ENCODE measurements at regions of chr17 and their contacts with region 1.

Region 1: DNA sequence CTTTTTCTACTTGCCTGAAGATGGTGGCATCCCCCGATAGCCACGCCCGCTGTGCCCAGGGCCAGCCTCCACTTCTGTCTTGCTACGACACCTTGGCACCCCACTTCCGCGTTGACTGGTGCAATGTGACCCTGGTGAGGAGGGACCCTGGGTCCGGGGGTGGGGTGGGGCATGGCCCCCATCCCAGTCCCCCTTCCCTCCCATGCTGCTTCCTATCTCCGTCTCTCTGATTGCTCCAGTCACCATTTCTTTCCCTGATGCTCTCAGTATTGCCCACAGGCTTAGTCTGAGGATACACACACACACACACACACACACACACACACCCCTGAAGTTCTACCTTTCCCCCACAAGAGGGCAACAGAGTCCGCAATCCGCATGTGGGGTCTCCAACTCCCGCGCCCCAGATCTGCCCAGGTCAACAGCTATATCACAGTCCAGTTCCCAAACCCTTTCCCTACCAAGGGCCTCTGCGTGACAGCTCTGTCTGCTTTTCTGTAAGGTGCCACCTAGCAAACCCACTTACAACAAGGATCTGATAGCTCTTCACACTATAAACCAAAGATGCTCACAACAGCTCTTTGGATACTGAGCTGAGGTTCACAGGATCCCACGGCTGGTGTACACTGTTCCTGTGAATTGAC is 3.4 kb downstream of the SGCA start:
- DNase-seq: peak in 1 of 2 experiments; percentile 73
- H3K4me3 ChIP-seq: no peak overlapping the region
- H3K27ac ChIP-seq: no peak overlapping the region
- H3K4me1 ChIP-seq: peaks cover 0 to 14% (median 8%) of the 10 kb centered on the region in 4 experiments; a peak in 5 of 7 replicates
- H3K27me3 ChIP-seq: no peaks in the 10 kb centered on the region
- CTCF ChIP-seq: peak; percentile 80 to 98 (median 96)
- EP300 ChIP-seq: no peak
- POLR2A ChIP-seq: no peak
- RAD21 ChIP-seq: peak; percentile 96 to 97

Region 2: DNA sequence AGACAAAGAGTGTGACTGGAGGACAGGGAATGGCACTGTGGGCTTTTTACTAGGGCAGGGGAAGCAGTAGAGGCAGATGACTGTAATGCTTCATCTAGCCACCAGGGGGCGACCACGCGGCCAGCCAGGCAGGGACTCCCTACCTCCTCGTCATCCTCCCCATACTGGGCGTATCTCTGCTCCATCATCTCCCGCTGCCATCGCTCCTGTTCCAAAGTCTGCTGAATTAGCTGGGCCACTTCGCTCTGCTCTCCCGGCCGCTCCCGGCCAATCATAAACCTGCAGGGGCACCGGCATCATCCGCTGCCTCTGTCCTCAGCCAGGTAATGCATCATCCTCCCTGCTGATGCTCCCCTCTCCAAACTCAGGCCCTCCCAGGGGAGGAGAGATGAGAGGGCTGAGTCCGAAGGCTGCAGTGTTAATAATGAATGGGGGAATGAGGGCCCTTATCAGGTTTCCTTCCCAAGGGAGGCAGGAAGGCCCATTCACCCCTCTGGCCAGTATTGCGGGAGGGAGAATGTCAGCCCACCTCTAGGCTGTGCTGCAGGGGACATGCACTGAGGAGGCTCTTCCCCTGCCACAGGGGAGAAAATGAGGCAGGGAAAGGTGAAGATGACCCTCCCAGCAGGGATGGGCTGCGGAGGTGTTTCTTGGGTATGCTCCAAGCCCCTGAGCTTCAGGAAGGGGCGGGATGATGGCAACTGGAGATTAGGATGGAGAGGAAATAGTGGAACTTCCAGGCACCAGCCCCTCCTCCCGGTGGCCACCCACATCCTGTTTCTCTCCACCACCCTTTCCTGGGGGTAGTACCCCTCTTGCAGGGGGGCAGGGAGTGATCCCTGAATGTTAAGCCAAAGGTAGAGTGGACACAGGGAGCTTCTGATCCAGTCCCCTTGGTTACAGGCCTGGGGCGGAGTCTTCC is 29.0 kb before region 1 on chr17:
- CTCF ChIA-PET with region 1: interaction called, 17 read pairs
- POLR2A ChIA-PET with region 1: no interaction called
- DNase-seq: peak; percentile 72 to 96
- H3K4me3 ChIP-seq: no peak overlapping the region
- H3K27ac ChIP-seq: no peak overlapping the region; the same call in 1 of the 2 replicates
- H3K4me1 ChIP-seq: peaks cover 0 to 7% (median 0%) of the 10 kb centered on the region in 4 experiments; a peak in 1 of 7 replicates
- H3K27me3 ChIP-seq: no peaks in the 10 kb centered on the region
- CTCF ChIP-seq: peak; percentile 87 to 98 (median 95)
- EP300 ChIP-seq: peak in 1 of 2 experiments; percentile 18; a peak in 1 of 3 replicates
- POLR2A ChIP-seq: no peak
- RAD21 ChIP-seq: peak; percentile 68 to 71

Region 3: DNA sequence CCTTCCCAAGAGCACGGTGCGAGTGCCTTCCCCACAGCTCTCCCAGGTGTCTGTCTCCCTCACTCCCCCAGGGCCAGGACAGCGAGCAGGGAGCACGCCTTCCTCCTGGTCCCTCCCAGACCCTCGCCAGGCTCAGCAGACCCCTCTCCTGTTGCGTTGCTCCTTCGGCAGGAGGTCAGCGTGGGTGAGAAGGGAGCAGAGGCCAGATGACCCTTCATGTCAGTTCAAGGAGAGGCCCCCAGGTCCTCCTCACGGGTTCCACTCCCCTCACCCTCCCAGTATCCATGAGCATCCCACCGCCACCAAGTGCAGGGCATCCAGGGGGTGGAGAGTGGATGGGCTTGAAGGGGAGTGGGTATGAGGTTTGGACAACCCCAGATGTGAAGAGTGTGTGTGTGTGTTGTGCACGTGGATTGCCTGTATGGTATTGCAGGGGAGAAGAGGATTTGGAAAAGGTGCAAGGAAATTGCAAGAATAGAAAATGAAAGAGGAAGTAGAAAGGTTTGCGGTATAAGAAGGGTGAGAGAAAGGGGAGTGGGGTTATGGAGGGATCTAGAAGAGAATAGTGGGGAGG is 14.3 kb after region 1 on chr17:
- CTCF ChIA-PET with region 1: interaction called, 53 read pairs
- POLR2A ChIA-PET with region 1: interaction called, 6 read pairs
- DNase-seq: no peak
- H3K4me3 ChIP-seq: no peak overlapping the region
- H3K27ac ChIP-seq: no peak overlapping the region
- H3K4me1 ChIP-seq: peaks cover 2 to 18% (median 6%) of the 10 kb centered on the region in 4 experiments; a peak in 6 of 7 replicates
- H3K27me3 ChIP-seq: no peaks in the 10 kb centered on the region
- CTCF ChIP-seq: no peak
- EP300 ChIP-seq: no peak
- POLR2A ChIP-seq: no peak
- RAD21 ChIP-seq: no peak

Region 4: DNA sequence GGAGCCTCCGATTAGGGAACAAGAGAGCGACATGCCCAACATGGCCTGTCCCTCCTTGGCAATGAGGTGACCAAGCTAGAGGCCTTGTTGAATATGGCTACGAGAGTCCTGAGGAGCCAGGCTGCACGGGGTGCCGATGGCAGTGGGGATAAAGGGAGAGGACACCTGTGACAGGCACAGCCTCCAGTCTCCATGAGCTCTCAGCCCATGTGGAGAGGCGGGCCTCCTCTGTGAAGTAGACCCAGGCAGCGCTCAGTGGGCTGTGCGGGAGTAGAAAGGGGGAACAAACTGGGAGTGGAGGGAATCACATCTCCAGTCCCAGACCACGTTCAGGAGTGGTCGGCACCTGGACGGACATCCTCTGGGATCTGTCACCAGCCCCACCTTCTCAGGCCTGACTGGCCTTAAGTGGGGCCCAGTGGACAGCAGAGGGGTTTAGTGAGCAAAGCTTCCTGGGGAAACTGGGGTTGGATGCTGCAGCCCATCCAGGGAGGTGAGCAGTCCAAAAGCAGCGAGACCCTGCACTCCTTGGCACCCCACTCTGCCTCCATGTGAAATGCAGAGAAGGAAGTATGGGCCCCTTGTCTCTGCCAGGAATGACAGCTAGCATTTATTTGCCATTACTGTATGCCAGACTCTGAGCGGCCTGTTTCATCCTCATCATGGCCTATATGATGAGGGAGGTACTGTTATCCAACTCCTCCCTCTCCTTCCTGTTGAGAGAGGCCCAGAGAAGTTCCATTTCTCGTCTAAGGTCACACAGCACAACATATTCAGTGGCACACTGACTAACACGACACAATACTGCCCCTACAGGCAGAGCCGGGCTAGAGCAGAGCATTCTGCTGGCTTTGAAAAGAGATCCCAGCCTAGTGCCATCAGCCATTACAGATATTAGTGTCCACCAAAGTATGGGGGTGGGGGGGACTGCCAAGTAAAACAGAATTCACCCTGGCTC is 100.5 kb after region 1 on chr17:
- CTCF ChIA-PET with region 1: interaction called, 27 read pairs
- POLR2A ChIA-PET with region 1: no interaction called
- DNase-seq: peak in 1 of 2 experiments; percentile 86
- H3K4me3 ChIP-seq: 0 out of 8 replicates have a peak overlapping the region, but pooled peaks of 1 of the 4 experiments have one; percentile 5
- H3K27ac ChIP-seq: no peak overlapping the region
- H3K4me1 ChIP-seq: peaks cover 2 to 25% (median 21%) of the 10 kb centered on the region in 4 experiments
- H3K27me3 ChIP-seq: peaks cover 0 to 12% (median 5%) of the 10 kb centered on the region in 4 experiments; a peak in 4 of 7 replicates
- CTCF ChIP-seq: peak; percentile 76 to 96 (median 86)
- EP300 ChIP-seq: no peak
- POLR2A ChIP-seq: no peak
- RAD21 ChIP-seq: peak; percentile 80 to 87

Region 5: DNA sequence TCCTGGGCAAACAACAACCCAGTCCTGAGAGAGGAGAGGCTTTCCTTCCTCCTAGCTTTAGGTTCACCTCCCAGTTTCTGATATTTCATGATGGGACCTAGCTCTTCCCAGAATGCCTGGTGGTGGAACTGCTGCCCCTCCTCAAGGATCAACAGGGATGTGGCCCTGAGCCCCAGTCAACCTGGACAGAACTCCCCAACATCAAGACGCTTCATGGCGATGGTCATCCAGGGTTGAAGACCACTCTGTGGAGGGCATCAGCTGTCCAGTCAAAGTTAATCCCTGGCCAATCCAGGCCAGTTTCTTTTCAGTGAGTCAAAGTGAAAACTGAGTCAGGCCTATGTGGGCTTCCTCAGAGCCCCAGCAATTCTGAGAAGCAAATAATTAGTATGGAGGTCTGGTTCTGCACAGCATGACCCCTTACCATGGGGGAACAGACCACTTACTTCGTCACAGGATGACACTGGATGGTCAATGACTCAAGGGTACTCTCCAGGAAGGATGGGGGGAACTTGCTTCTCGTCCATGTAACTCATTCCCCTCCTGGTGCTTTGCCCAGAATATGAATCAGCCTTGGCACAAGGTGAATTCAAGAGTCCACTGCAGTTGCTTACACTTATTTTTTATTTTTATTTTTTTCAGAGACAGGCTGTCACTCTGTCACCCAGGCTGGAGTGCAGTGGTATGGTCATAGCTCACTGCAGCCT is 162.0 kb after region 1 on chr17:
- CTCF ChIA-PET with region 1: interaction called, 26 read pairs
- POLR2A ChIA-PET with region 1: no interaction called
- DNase-seq: no peak
- H3K4me3 ChIP-seq: no peak overlapping the region
- H3K27ac ChIP-seq: no peak overlapping the region
- H3K4me1 ChIP-seq: peaks cover 0 to 2% (median 0%) of the 10 kb centered on the region in 4 experiments; a peak in 1 of 7 replicates
- H3K27me3 ChIP-seq: no peaks in the 10 kb centered on the region
- CTCF ChIP-seq: no peak
- EP300 ChIP-seq: no peak
- POLR2A ChIP-seq: no peak
- RAD21 ChIP-seq: no peak

Region 6: GRCh38 chr17:50361561-50362480 is 192.6 kb after region 1 on chr17:
- CTCF ChIA-PET with region 1: interaction called, 11 read pairs
- POLR2A ChIA-PET with region 1: no interaction called
- DNase-seq: peak; percentile 34 to 67
- H3K4me3 ChIP-seq: no peak overlapping the region
- H3K27ac ChIP-seq: no peak overlapping the region
- H3K4me1 ChIP-seq: peaks cover 0 to 27% (median 11%) of the 10 kb centered on the region in 4 experiments; a peak in 6 of 7 replicates
- H3K27me3 ChIP-seq: no peaks in the 10 kb centered on the region
- CTCF ChIP-seq: peak; percentile 63 to 85 (median 79)
- EP300 ChIP-seq: no peak
- POLR2A ChIP-seq: no peak; a peak in 1 of 3 replicates
- RAD21 ChIP-seq: peak; percentile 53 to 65